GM12878 (cell line): ENCODE measurements at regions of chr3 and their contacts with region 1.

Region 1: GRCh38 chr3:52339612-52340011 is 23.5 kb downstream of the DNAH1 start:
- DNase-seq: peak; percentile 34
- ATAC-seq: peak; percentile 83
- H3K4me3 ChIP-seq: no peak overlapping the region
- H3K27ac ChIP-seq: no peak overlapping the region
- H3K4me1 ChIP-seq: peaks cover 7% of the 10 kb centered on the region; the same call in 1 of the 2 replicates
- H3K27me3 ChIP-seq: no peaks in the 10 kb centered on the region
- CTCF ChIP-seq: peak; percentile 60 to 77 (median 62)
- EP300 ChIP-seq: no peak
- POLR2A ChIP-seq: no peak
- RAD21 ChIP-seq: peak; percentile 99

Region 2: GRCh38 chr3:52001443-52001974 is 338.1 kb before region 1 on chr3:
- CTCF ChIA-PET with region 1: interaction called, 11 read pairs
- POLR2A ChIA-PET with region 1: no interaction called
- RAD21 ChIA-PET with region 1: interaction called, 5 read pairs
- SMC1A ChIA-PET with region 1: interaction called, 3 read pairs
- in situ Hi-C with region 1: no loop called
- intact Hi-C with region 1: no loop called
- DNase-seq: no peak
- ATAC-seq: peak; percentile 97
- H3K4me3 ChIP-seq: no peak overlapping the region
- H3K27ac ChIP-seq: no peak overlapping the region
- H3K4me1 ChIP-seq: peaks cover 12% of the 10 kb centered on the region
- H3K27me3 ChIP-seq: no peaks in the 10 kb centered on the region; a peak in 2 of 4 replicates
- CTCF ChIP-seq: peak; percentile 98 to 99 (median 98)
- EP300 ChIP-seq: no peak
- POLR2A ChIP-seq: no peak
- RAD21 ChIP-seq: peak; percentile 97

Region 3: DNA sequence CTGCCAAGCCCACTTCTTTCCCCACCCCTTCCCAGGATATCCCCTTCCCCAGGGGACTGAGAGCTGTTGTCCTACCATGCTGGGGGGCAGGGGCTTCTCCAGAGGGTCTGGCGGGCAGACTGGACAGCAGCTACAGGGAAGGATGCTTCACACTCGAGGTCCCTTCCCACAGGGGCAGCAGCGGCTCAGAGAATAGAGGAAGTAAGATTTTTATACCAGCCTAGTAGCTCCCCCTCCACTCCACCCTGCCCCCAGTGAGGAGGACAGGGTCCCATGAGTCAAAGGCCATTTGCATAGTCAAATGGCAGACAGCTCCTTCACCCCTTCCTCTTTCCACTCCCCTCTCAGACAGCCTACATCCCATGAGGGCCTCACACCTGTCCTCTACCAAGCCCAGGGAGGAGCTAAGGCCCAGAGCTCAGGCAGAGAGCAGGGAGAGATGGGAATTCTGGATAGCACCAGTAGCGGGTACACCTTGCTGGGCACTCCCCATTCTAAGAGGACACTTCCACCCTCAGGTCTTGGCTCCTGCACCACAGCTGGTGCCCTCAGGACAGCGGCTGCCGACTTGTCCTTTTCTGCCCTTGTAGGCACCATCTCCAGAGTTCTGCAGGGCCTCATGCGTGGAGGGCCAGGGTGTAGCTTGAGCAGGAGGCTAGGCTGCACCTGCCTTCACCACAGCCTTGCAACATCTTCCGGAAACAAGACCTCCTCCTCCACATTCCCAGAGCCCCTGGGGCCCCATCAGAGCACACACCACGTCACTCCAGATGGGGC is 114.0 kb before region 1 on chr3 and contains the start of gene TLR9:
- CTCF ChIA-PET with region 1: interaction called, 129 read pairs
- POLR2A ChIA-PET with region 1: interaction called, 3 read pairs
- RAD21 ChIA-PET with region 1: interaction called, 53 read pairs
- SMC1A ChIA-PET with region 1: interaction called, 112 read pairs
- in situ Hi-C with region 1: loop called (anchors 5 kb)
- intact Hi-C with region 1: loop called (anchors 1 kb)
- DNase-seq: peak; percentile 71
- ATAC-seq: peak; percentile 91
- H3K4me3 ChIP-seq: peak within 1 kb of the TSS; percentile 60
- H3K27ac ChIP-seq: peak within 1 kb of the TSS; percentile 76
- H3K4me1 ChIP-seq: peaks cover 22% of the 10 kb centered on the region
- H3K27me3 ChIP-seq: no peaks in the 10 kb centered on the region
- CTCF ChIP-seq: no peak
- EP300 ChIP-seq: peak in 1 of 2 experiments; percentile 51; a peak in 1 of 4 replicates
- POLR2A ChIP-seq: peak; percentile 80
- RAD21 ChIP-seq: no peak
- polyA plus RNA-seq, gene TLR9: 0.10 TPM in 1 of 2 experiments, not detected in the other

Region 4: GRCh38 chr3:52245322-52246263 is 94.0 kb before region 1 on chr3 and contains the start of gene PPM1M:
- CTCF ChIA-PET with region 1: interaction called, 15 read pairs
- POLR2A ChIA-PET with region 1: interaction called, 3 read pairs
- RAD21 ChIA-PET with region 1: interaction called, 10 read pairs
- SMC1A ChIA-PET with region 1: interaction called, 12 read pairs
- in situ Hi-C with region 1: no loop called
- intact Hi-C with region 1: no loop called
- DNase-seq: no peak
- ATAC-seq: peak; percentile 10
- H3K4me3 ChIP-seq: peak within 1 kb of the TSS; percentile 89
- H3K27ac ChIP-seq: peak within 1 kb of the TSS; percentile 67
- H3K4me1 ChIP-seq: peaks cover 49% of the 10 kb centered on the region
- H3K27me3 ChIP-seq: no peaks in the 10 kb centered on the region
- CTCF ChIP-seq: no peak
- EP300 ChIP-seq: no peak
- POLR2A ChIP-seq: peak; percentile 48
- RAD21 ChIP-seq: no peak
- polyA plus RNA-seq, gene PPM1M: 7.5 to 15.3 TPM

Region 5: GRCh38 chr3:52291508-52292181 is 48.0 kb before region 1 on chr3:
- CTCF ChIA-PET with region 1: interaction called, 451 read pairs
- POLR2A ChIA-PET with region 1: interaction called, 6 read pairs
- RAD21 ChIA-PET with region 1: interaction called, 131 read pairs
- SMC1A ChIA-PET with region 1: interaction called, 159 read pairs
- in situ Hi-C with region 1: loop called (anchors 5 kb)
- intact Hi-C with region 1: loop called (anchors 1 kb)
- DNase-seq: no peak
- ATAC-seq: peak; percentile 53
- H3K4me3 ChIP-seq: no peak overlapping the region
- H3K27ac ChIP-seq: no peak overlapping the region
- H3K4me1 ChIP-seq: peaks cover 11% of the 10 kb centered on the region
- H3K27me3 ChIP-seq: no peaks in the 10 kb centered on the region
- CTCF ChIP-seq: peak; percentile 63 to 91 (median 67)
- EP300 ChIP-seq: no peak
- POLR2A ChIP-seq: no peak
- RAD21 ChIP-seq: peak; percentile 93

Region 6: GRCh38 chr3:52313774-52314188 is 25.8 kb before region 1 on chr3:
- CTCF ChIA-PET with region 1: interaction called, 60 read pairs
- POLR2A ChIA-PET with region 1: interaction called, 8 read pairs
- RAD21 ChIA-PET with region 1: interaction called, 5 read pairs
- SMC1A ChIA-PET with region 1: interaction called, 12 read pairs
- in situ Hi-C with region 1: no loop called
- intact Hi-C with region 1: no loop called
- DNase-seq: peak; percentile 61
- ATAC-seq: peak; percentile 92
- H3K4me3 ChIP-seq: peak overlapping the region; percentile 59
- H3K27ac ChIP-seq: peak overlapping the region; percentile 97
- H3K4me1 ChIP-seq: peaks cover 58% of the 10 kb centered on the region
- H3K27me3 ChIP-seq: no peaks in the 10 kb centered on the region
- CTCF ChIP-seq: no peak
- EP300 ChIP-seq: peak; percentile 91 to 98
- POLR2A ChIP-seq: peak; percentile 62; the same call in 1 of the 2 replicates
- RAD21 ChIP-seq: no peak

Region 7: DNA sequence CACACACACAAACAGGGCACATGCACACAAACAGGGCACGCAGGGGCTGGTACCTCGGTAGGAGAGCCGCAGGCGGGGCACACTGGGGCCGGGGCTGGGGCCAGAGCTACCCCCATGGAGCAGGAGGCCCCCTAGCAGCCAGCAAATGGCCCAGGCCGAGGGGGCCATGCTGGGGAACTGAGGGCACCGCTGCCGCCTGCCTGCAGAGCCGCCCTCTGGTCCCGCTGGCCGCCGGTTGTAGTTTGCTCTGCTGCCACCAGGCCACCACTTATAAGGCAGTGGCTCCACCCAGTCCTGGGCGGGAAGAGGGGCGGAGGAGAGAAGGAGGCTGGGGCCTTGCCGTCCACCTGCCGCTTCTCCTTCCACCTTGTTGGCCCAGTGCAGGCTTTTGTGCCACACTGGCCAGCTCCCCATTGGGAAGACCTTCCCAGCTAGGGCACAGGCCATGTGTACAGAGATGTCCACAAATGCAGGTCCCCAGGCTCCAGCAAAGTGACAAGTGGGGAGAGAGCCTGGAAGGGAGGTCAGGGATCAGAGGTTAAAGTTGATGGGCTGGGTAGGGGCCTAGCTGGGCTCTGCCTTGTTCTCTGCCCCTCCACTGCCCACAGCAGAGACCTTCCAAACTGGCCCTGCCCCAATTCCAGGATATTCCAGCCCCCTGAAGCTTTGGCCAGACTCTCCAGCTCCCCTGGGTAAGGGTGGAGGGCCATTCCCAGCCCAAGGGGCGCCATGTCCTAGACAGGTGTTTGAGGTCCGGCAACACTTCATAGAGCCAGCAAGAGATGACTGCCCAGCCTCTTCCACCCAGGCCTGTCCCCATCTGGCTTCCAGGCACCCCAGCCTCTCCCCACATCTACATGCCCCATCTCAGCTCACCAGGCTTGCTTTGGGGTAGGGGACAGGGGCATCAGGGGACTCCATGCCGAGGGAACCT is 105.5 kb after region 1 on chr3 and contains the start of gene SEMA3G:
- CTCF ChIA-PET with region 1: interaction called, 14 read pairs
- POLR2A ChIA-PET with region 1: no interaction called
- RAD21 ChIA-PET with region 1: interaction called, 5 read pairs
- SMC1A ChIA-PET with region 1: interaction called, 11 read pairs
- in situ Hi-C with region 1: no loop called
- intact Hi-C with region 1: no loop called
- DNase-seq: no peak
- ATAC-seq: peak; percentile 98
- H3K4me3 ChIP-seq: no peak within 1 kb of the TSS
- H3K27ac ChIP-seq: no peak within 1 kb of the TSS
- H3K4me1 ChIP-seq: no peaks in the 10 kb centered on the region
- H3K27me3 ChIP-seq: no peaks in the 10 kb centered on the region
- CTCF ChIP-seq: peak; percentile 30 to 73 (median 52)
- EP300 ChIP-seq: no peak
- POLR2A ChIP-seq: peak; percentile 71
- RAD21 ChIP-seq: 0 out of 2 replicates have a peak, but pooled peaks have one; percentile 14
- polyA plus RNA-seq, gene SEMA3G: not detected